H1 (cell line): ENCODE measurements at regions of chr22 and their contacts with region 1.

Region 1: DNA sequence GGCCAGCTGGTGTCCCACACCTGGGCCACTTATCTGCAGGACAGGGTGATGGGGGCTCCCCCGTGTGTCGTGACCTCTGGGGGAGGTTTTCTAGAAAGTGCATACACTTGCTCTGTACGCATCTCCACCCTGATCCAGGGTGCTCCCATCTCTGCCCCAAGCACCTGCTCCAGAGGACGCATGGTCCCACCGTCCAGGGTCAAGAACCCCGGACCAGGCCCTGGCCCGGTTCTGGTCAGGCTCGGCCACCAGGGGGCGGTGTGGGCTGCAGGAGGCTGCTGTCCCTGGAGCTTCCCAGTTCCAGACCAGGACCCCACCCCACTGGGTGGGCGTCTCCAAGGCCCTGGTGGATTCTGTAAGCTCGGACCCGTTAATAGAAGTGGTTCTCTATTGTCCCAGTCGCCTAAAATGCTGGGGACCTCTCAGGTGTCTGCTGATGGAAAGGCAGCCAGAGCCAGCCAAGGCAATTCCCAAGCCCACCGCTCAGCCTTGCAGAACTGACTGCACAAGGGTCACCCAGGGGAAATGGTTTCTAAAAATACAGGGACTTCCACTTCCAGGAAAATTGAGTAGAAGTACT is 34.7 kb upstream of the SEPTIN5 start:
- DNase-seq: peak in 1 of 2 experiments; percentile 96
- H3K4me3 ChIP-seq: no peak overlapping the region
- H3K27ac ChIP-seq: no peak overlapping the region
- H3K4me1 ChIP-seq: peaks cover 0 to 3% (median 0%) of the 10 kb centered on the region in 4 experiments; a peak in 3 of 7 replicates
- H3K27me3 ChIP-seq: no peaks in the 10 kb centered on the region; a peak in 2 of 7 replicates
- CTCF ChIP-seq: peak; percentile 80 to 87 (median 85)
- EP300 ChIP-seq: no peak
- POLR2A ChIP-seq: no peak
- RAD21 ChIP-seq: peak; percentile 78 to 88

Region 2: DNA sequence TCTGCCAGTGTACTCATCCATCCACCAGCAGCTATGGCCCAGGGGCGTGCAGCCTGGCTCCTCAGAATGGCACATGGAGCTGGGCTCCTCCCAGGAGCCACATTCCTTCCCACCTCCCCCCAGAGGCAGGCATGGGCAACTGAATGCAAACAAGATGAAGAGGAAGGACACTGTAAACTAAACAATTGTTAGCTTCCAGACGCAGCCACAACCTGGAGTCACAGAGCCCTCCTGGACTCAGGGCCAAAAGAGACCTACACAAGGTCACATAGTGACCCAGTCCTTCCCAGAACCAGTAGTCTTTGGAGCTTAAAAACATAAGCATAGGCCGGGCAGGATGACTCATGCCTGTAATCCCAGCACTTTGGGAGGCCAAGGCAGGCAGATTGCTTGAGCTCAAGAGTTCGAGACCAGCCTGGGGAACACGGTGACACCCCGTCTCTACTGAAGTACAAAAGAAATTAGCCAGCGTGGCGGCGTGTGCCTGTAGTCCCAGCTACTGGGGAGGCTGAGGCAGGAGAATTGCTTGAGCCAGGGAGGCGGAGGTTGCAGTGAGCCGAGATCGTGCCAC is 124.7 kb before region 1 on chr22:
- CTCF ChIA-PET with region 1: no interaction called
- POLR2A ChIA-PET with region 1: no interaction called
- DNase-seq: peak; percentile 41 to 70
- H3K4me3 ChIP-seq: no peak overlapping the region
- H3K27ac ChIP-seq: no peak overlapping the region; the same call in 1 of the 2 replicates
- H3K4me1 ChIP-seq: peaks cover 0 to 5% (median 1%) of the 10 kb centered on the region in 4 experiments; a peak in 6 of 7 replicates
- H3K27me3 ChIP-seq: peaks cover 0 to 2% (median 0%) of the 10 kb centered on the region in 4 experiments; a peak in 1 of 7 replicates
- CTCF ChIP-seq: peak; percentile 34 to 59 (median 45)
- EP300 ChIP-seq: peak in 1 of 2 experiments; percentile 58; a peak in 1 of 3 replicates
- POLR2A ChIP-seq: no peak
- RAD21 ChIP-seq: peak; percentile 8 to 37; a peak in 2 of 4 replicates

Region 3: DNA sequence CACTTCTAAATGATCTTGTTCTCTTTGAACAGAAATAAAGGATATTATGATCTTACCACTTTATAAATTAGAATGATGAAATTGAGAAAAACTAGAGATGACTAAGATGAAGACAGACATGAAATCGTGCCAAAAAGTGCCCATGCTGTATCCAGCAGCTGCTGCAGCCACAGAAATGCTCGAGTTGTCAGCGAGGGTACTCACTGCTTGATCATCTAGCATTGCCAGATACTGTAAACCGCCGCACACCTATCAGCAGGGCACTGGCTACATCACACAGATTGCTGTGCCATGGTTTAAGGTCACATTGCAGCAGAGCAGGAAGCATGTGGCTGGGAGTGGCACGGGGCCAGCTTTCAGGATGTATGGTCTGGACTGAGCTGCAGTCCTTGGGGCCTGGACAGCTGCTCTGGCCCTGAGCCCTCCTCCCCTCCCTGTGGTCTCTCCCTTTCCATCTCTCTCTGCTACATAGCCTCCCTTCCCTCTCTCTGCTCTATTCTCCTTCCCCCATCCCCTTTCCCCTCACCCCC is 16.3 kb before region 1 on chr22:
- CTCF ChIA-PET with region 1: interaction called, 16 read pairs
- POLR2A ChIA-PET with region 1: interaction called, 3 read pairs
- DNase-seq: no peak
- H3K4me3 ChIP-seq: no peak overlapping the region
- H3K27ac ChIP-seq: no peak overlapping the region
- H3K4me1 ChIP-seq: peaks cover 0 to 9% (median 3%) of the 10 kb centered on the region in 4 experiments; a peak in 5 of 7 replicates
- H3K27me3 ChIP-seq: peaks cover 0 to 3% (median 0%) of the 10 kb centered on the region in 4 experiments; a peak in 2 of 7 replicates
- CTCF ChIP-seq: no peak
- EP300 ChIP-seq: no peak
- POLR2A ChIP-seq: no peak
- RAD21 ChIP-seq: no peak

Region 4: DNA sequence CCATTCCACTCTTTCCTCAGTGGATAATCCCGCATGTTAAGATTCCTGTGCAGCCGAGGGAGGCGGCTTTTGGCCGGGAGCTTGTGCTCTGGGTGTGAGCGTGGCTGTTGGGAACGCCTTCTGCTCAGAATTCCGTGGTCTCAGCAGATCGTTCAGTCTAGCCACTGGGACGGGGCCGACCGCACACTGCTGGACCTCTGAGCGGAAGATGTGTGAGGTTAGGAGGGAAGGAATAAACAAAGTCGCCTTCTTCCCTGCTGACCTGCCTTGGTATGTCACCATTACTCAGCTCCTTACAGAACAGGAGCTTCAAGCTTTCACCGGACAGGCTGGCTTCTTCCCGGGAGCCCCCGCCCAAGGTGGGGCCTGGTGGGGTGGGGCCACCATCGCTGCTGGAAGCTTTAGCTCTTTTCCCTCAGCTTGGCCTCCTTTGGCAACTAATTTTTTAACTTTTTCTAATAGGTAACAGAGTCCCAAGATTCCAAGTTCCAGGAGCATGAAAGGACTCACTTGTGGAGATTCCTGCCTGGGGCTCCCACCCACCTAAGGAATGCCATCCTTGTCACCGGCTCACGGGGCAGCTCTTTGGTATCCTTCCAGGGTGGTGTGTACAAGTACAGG is 12.2 kb after region 1 on chr22:
- CTCF ChIA-PET with region 1: interaction called, 76 read pairs
- POLR2A ChIA-PET with region 1: interaction called, 4 read pairs
- DNase-seq: no peak
- H3K4me3 ChIP-seq: no peak overlapping the region
- H3K27ac ChIP-seq: no peak overlapping the region
- H3K4me1 ChIP-seq: peaks cover 0 to 11% (median 5%) of the 10 kb centered on the region in 4 experiments; a peak in 6 of 7 replicates
- H3K27me3 ChIP-seq: no peaks in the 10 kb centered on the region
- CTCF ChIP-seq: no peak
- EP300 ChIP-seq: no peak
- POLR2A ChIP-seq: no peak
- RAD21 ChIP-seq: no peak

Region 5: GRCh38 chr22:19705181-19705934 is 25.7 kb after region 1 on chr22:
- CTCF ChIA-PET with region 1: interaction called, 76 read pairs
- POLR2A ChIA-PET with region 1: no interaction called
- DNase-seq: peak; percentile 90 to 91
- H3K4me3 ChIP-seq: no peak overlapping the region
- H3K27ac ChIP-seq: peak overlapping the region; percentile 46; the same call in 1 of the 2 replicates
- H3K4me1 ChIP-seq: peaks cover 0 to 24% (median 16%) of the 10 kb centered on the region in 4 experiments; a peak in 6 of 7 replicates
- H3K27me3 ChIP-seq: peaks cover 0 to 8% (median 7%) of the 10 kb centered on the region in 4 experiments; a peak in 4 of 7 replicates
- CTCF ChIP-seq: peak; percentile 71 to 83 (median 72)
- EP300 ChIP-seq: peak in 1 of 2 experiments; percentile 94; a peak in 2 of 3 replicates
- POLR2A ChIP-seq: no peak
- RAD21 ChIP-seq: peak; percentile 33 to 58

Region 6: GRCh38 chr22:19717691-19718455 is 38.3 kb after region 1 on chr22:
- CTCF ChIA-PET with region 1: interaction called, 50 read pairs
- POLR2A ChIA-PET with region 1: interaction called, 7 read pairs
- DNase-seq: peak in 1 of 2 experiments; percentile 92
- H3K4me3 ChIP-seq: peak overlapping the region; percentile 0 to 65 (median 36); a peak in 6 of 8 replicates
- H3K27ac ChIP-seq: no peak overlapping the region
- H3K4me1 ChIP-seq: peaks cover 0 to 30% (median 18%) of the 10 kb centered on the region in 4 experiments; a peak in 5 of 7 replicates
- H3K27me3 ChIP-seq: peaks cover 47 to 96% (median 80%) of the 10 kb centered on the region in 4 experiments
- CTCF ChIP-seq: peak; percentile 76 to 94 (median 78)
- EP300 ChIP-seq: no peak
- POLR2A ChIP-seq: no peak
- RAD21 ChIP-seq: peak; percentile 66 to 84

Region 7: DNA sequence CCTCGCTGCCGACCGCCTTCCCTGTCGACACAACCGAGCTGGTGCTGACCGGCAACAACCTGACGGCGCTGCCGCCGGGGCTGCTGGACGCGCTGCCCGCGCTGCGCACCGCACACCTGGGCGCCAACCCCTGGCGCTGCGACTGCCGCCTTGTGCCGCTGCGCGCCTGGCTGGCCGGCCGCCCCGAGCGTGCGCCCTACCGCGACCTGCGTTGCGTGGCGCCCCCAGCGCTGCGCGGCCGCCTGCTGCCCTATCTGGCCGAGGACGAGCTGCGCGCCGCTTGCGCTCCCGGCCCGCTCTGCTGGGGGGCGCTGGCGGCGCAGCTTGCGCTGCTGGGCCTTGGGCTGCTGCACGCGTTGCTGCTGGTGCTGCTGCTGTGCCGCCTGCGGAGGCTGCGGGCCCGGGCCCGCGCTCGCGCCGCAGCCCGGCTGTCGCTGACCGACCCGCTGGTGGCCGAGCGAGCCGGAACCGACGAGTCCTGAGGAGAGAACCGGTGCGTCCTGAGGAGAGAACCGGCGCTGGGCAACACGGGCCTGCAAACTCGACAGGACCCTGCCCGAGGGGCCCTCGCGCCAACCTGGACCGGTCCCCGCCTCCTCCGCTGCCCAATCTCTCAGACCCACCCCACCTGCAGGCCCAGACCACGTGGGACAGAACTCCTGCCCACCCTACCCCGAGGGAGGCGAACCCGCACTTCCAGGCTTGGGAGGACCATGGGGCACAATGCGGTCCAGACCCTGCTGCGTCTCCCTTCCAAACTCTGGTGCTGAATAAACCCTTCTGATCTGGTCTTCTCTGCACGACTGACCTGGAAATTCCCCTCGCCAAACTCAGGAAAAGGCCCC is 44.6 kb after region 1 on chr22:
- CTCF ChIA-PET with region 1: interaction called, 18 read pairs
- POLR2A ChIA-PET with region 1: interaction called, 3 read pairs
- DNase-seq: peak in 1 of 2 experiments; percentile 79
- H3K4me3 ChIP-seq: peak overlapping the region in 3 of 4 experiments; percentile 25 to 55 (median 32); a peak in 5 of 8 replicates
- H3K27ac ChIP-seq: no peak overlapping the region
- H3K4me1 ChIP-seq: peaks cover 0 to 33% (median 20%) of the 10 kb centered on the region in 4 experiments; a peak in 6 of 7 replicates
- H3K27me3 ChIP-seq: peaks cover 80 to 100% (median 97%) of the 10 kb centered on the region in 4 experiments
- CTCF ChIP-seq: peak; percentile 59 to 89 (median 76)
- EP300 ChIP-seq: no peak
- POLR2A ChIP-seq: no peak
- RAD21 ChIP-seq: peak; percentile 47 to 77

Region 8: DNA sequence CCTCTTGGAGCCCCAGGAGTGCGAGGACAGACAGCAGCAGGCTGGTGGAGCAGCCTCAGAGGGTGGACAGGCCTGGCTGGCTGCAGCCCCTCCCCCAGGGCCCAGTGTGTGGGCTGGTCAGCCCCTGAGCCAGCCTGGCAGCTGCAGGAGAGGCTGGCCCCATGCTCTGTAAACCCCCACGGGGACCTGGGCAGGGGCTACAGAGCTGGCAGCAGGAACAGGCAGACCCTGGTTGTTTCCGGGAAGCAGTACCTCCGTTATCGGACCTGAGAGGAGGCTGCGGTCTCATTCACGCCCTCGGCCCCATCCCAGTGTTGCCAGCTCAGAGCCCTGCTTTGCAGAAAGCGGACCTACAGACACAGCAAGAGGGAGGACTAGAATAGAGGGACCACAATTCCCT is 223.4 kb after region 1 on chr22:
- CTCF ChIA-PET with region 1: interaction called, 17 read pairs
- POLR2A ChIA-PET with region 1: no interaction called
- DNase-seq: no peak
- H3K4me3 ChIP-seq: no peak overlapping the region
- H3K27ac ChIP-seq: no peak overlapping the region
- H3K4me1 ChIP-seq: peaks cover 5 to 12% (median 12%) of the 10 kb centered on the region in 4 experiments
- H3K27me3 ChIP-seq: no peaks in the 10 kb centered on the region; a peak in 1 of 7 replicates
- CTCF ChIP-seq: no peak
- EP300 ChIP-seq: no peak
- POLR2A ChIP-seq: no peak
- RAD21 ChIP-seq: no peak